CD8-positive, alpha-beta T cell (primary cell): ENCODE measurements at regions of chr9 and their contacts with region 1.

Region 1: DNA sequence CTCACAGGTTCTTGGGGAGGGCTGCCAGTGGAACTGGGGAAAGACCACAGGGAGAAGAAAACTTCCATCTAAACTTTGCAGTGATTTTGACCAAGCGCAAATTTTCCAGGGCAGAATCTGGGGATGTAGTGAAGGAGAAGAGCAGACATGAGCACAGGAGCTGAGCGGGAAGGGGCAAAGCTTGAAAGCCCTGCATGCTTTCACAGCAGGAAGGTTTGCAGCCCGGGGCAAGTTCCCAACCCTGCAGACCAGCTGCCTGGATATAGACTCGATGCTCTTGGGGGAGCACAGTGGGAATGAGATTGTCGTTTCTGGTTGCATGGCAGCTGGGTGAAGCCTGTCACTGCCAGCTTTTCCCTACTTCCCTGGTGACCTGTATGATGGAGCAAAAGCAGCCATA is 276.8 kb upstream of the RORB start:
- DNase-seq: no peak
- ATAC-seq: no peak
- H3K4me3 ChIP-seq: no peak overlapping the region
- H3K4me3 Mint-ChIP-seq: no peak overlapping the region
- H3K27ac ChIP-seq: no peak overlapping the region
- H3K27ac Mint-ChIP-seq: no peak overlapping the region
- H3K4me1 ChIP-seq: no peaks in the 10 kb centered on the region
- H3K4me1 Mint-ChIP-seq: no peaks in the 10 kb centered on the region
- H3K27me3 ChIP-seq: no peaks in the 10 kb centered on the region
- H3K27me3 Mint-ChIP-seq: no peaks in the 10 kb centered on the region
- CTCF ChIP-seq: no peak

Region 2: DNA sequence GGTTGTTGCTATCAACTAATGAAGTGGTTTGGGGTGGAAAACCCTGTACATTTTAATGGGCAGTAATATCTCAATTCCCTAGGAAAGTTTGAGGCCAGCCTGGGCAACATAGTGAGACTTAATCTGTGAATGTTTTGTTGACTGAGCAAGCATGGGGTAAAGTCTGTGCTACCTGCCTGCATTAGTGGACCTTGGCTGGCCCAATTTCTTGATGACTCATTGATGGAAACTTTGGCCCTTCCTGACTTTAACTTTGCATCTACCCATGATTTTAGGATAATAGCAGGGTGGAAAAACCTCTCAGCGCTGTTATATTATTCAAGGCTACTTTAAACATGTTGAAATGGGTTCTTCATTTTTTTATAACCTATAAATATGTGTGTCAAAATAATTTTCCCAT is 112.6 kb before region 1 on chr9:
- CTCF ChIA-PET with region 1: no interaction called
- POLR2A ChIA-PET with region 1: no interaction called
- intact Hi-C with region 1: no loop called
- DNase-seq: no peak
- ATAC-seq: no peak
- H3K4me3 ChIP-seq: no peak overlapping the region
- H3K4me3 Mint-ChIP-seq: no peak overlapping the region
- H3K27ac ChIP-seq: no peak overlapping the region
- H3K27ac Mint-ChIP-seq: no peak overlapping the region
- H3K4me1 ChIP-seq: no peaks in the 10 kb centered on the region
- H3K4me1 Mint-ChIP-seq: no peaks in the 10 kb centered on the region
- H3K27me3 ChIP-seq: no peaks in the 10 kb centered on the region
- H3K27me3 Mint-ChIP-seq: no peaks in the 10 kb centered on the region
- CTCF ChIP-seq: no peak

Region 3: DNA sequence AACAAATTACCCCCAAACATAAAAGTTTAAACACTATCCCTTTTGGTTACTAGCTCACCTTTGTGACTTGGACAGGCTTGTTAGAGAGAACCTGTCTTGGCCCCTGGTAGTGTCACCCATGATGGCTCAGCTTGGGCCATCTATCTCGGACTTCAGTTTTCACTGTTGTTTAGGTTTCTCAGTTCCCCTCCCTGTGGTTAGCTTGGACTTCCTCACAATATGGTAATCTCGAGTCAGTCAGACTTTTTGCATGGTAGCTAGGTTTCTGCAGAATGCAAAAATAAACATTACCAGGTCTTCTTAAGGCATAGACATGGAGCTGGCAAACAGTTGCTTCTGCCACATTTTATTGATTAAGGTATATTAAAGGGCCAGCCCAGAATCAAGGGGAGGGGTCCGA is 47.5 kb before region 1 on chr9:
- CTCF ChIA-PET with region 1: no interaction called
- POLR2A ChIA-PET with region 1: no interaction called
- intact Hi-C with region 1: no loop called
- DNase-seq: no peak
- ATAC-seq: no peak
- H3K4me3 ChIP-seq: no peak overlapping the region
- H3K4me3 Mint-ChIP-seq: no peak overlapping the region
- H3K27ac ChIP-seq: no peak overlapping the region
- H3K27ac Mint-ChIP-seq: no peak overlapping the region
- H3K4me1 ChIP-seq: no peaks in the 10 kb centered on the region
- H3K4me1 Mint-ChIP-seq: peaks cover 2% of the 10 kb centered on the region
- H3K27me3 ChIP-seq: no peaks in the 10 kb centered on the region
- H3K27me3 Mint-ChIP-seq: no peaks in the 10 kb centered on the region
- CTCF ChIP-seq: no peak

Region 4: DNA sequence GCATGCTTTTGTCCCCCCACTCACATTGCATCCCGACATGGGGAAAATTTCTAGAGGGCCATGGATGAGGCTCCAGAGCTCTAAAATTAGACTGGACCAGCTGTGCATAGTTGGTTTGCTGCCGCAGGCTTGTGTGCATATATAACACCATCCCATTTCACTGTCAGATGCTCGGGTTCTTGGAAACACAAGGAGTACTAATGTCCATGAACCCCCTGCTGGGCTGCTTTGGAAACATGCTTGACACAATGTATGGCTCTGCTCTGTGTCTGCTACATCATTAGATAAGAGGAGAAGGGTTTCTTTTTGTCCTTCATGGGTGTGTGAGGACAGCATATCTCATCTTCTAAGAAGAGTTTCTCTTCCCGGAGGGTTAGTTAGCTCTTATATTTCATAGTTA is 15.3 kb before region 1 on chr9:
- CTCF ChIA-PET with region 1: no interaction called
- POLR2A ChIA-PET with region 1: no interaction called
- intact Hi-C with region 1: loop called in 1 of 2 experiments (anchors 1 kb)
- DNase-seq: no peak
- ATAC-seq: no peak
- H3K4me3 ChIP-seq: no peak overlapping the region
- H3K4me3 Mint-ChIP-seq: no peak overlapping the region
- H3K27ac ChIP-seq: no peak overlapping the region
- H3K27ac Mint-ChIP-seq: no peak overlapping the region
- H3K4me1 ChIP-seq: no peaks in the 10 kb centered on the region
- H3K4me1 Mint-ChIP-seq: no peaks in the 10 kb centered on the region
- H3K27me3 ChIP-seq: no peaks in the 10 kb centered on the region
- H3K27me3 Mint-ChIP-seq: no peaks in the 10 kb centered on the region
- CTCF ChIP-seq: no peak

Region 5: DNA sequence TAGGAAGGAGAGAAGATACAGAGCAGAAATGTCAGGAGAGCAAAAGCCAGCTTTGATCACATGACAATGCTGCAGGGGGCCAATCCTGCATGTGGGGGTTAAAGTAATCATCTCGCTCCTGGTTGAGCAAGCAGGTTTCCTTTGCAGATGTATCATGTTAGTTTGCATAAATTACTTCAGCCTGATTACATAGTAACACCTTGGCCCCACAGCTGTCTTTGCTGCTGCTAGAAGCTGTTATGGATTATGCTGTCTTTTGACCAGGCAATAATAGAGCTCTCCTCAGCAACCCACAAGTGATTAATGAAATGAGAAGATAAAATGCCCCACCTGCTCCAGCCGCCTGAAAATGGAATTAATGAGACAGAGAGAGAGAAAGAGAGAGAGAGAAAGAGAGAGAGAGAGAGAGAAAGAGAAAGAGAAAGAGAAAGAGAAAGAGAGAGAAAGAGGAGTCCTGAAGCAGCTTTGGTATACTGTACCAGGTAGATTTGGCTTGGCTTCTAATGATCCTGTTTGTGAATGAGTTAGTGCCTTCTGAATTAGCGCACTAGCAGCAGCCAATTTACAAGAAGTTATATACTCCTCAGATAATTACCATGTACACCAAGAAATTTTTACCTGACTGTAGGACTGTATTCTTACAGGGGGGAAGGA is 102.5 kb after region 1 on chr9:
- CTCF ChIA-PET with region 1: no interaction called
- POLR2A ChIA-PET with region 1: no interaction called
- intact Hi-C with region 1: no loop called
- DNase-seq: peak in 2 of 9 experiments; percentile 17 to 29
- ATAC-seq: peak; percentile 23
- H3K4me3 ChIP-seq: peak overlapping the region in 1 of 2 experiments; percentile 2
- H3K4me3 Mint-ChIP-seq: peak overlapping the region; percentile 70
- H3K27ac ChIP-seq: peak overlapping the region in 1 of 2 experiments; percentile 12
- H3K27ac Mint-ChIP-seq: peak overlapping the region; percentile 55
- H3K4me1 ChIP-seq: no peaks in the 10 kb centered on the region
- H3K4me1 Mint-ChIP-seq: peaks cover 3% of the 10 kb centered on the region
- H3K27me3 ChIP-seq: no peaks in the 10 kb centered on the region
- H3K27me3 Mint-ChIP-seq: no peaks in the 10 kb centered on the region
- CTCF ChIP-seq: no peak